Naive thymus-derived CD4-positive, alpha-beta T cell (primary cell): ENCODE measurements at regions of chr17 and their contacts with region 1.

Region 1: DNA sequence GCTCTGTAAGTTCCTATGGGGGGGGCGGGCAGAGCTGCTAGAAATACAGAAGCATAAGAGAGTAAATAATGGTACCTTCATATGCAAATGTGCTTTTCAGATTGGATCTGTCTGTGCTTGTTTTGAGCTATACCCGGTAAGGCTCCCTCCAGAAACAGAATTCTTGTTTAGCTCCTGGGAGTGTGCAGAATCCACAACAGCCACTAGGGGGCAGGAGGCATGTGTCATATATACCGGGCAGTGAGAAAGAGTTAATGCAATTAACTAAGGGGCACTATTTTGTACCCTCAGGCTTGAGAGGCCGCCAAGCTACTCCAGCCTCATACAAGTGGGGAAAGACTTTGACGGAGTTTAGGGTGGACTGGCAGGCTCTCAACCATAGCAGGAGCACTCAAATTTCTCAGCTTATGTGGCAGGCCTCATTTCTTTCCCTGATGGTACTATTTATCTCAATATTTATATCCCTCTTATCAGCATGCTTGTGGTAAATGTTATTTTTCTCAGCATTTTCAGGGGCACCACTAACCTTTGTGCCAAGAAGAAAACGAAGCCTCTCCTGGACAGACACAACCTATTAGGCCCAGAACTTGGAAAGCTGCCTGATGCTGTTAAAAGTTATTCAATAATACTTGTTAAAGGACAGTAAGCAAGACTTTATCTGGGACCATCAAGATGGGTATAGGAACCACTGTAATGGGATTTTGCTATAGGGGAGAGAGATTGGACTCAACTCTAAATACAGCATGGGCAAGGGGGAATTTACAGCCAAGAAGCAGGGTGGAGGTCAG is 10.7 kb upstream of the CENPV start:
- DNase-seq: peak; percentile 42 to 73 (median 57)
- ATAC-seq: peak; percentile 96
- H3K4me3 ChIP-seq: no peak overlapping the region
- H3K4me3 Mint-ChIP-seq: no peak overlapping the region
- H3K27ac ChIP-seq: no peak overlapping the region
- H3K27ac Mint-ChIP-seq: no peak overlapping the region
- H3K4me1 ChIP-seq: no peaks in the 10 kb centered on the region
- H3K4me1 Mint-ChIP-seq: peaks cover 0 to 5% (median 0%) of the 10 kb centered on the region in 7 donors
- H3K27me3 ChIP-seq: no peaks in the 10 kb centered on the region
- H3K27me3 Mint-ChIP-seq: no peaks in the 10 kb centered on the region

Region 2: DNA sequence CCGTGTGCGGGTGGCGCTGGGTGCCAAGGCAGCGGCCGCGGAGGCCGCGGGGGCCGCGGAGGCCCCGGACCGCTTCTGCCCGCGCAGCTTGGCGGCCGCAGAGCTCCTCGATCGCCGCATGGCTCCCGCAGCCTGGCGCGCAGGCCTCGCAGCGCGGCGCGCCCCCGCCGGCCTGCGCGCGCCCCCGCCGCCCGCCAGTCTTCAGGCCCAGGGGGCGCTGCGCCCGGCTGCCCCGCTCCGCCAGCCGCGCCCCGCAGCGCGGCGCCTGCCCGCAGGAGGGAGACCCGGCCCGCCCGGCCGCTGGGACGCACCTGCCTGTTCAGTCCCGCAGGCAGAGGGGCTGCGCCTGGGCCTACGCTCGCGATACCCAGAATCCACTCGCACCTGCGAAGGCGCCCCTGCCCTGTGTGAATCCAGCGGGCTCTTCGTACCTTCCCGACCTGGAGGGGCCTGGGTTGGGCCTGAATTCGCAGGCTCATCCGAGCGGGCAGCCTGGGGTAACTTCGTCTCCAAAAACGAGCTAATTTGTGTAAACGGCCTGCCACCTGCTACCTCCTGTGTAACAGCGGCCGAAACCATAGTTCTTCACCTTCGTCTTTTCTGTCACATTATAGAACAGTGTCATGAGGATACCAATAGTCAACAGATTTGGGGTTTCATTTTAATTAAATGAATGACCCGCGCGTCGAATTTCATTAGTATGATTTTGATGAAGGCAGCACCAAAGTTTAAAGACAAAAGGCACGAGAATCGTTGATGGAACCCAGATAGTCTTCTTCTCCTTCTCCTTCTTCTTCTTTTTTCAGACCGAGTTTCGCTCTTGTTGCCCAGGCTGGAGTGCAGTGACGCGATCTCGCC is 10.4 kb before region 1 on chr17 and contains the start of gene CENPV:
- CTCF ChIA-PET with region 1: interaction called, 19 read pairs
- POLR2A ChIA-PET with region 1: interaction called, 3 read pairs
- intact Hi-C with region 1: no loop called
- DNase-seq: peak; percentile 62 to 76 (median 71)
- ATAC-seq: peak; percentile 96
- H3K4me3 ChIP-seq: peak within 1 kb of the TSS; percentile 78
- H3K4me3 Mint-ChIP-seq: peak within 1 kb of the TSS; percentile 89 to 98 (median 95)
- H3K27ac ChIP-seq: peak within 1 kb of the TSS; percentile 73
- H3K27ac Mint-ChIP-seq: peak within 1 kb of the TSS; percentile 73 to 98 (median 86)
- H3K4me1 ChIP-seq: peaks cover 4 to 5% of the 10 kb centered on the region in 2 donors
- H3K4me1 Mint-ChIP-seq: peaks cover 11 to 23% (median 19%) of the 10 kb centered on the region in 7 donors
- H3K27me3 ChIP-seq: no peaks in the 10 kb centered on the region
- H3K27me3 Mint-ChIP-seq: peaks cover 0 to 27% (median 0%) of the 10 kb centered on the region in 5 donors
- total RNA-seq, gene CENPV: 9.8 to 30.3 (median 21.7) TPM

Region 3: DNA sequence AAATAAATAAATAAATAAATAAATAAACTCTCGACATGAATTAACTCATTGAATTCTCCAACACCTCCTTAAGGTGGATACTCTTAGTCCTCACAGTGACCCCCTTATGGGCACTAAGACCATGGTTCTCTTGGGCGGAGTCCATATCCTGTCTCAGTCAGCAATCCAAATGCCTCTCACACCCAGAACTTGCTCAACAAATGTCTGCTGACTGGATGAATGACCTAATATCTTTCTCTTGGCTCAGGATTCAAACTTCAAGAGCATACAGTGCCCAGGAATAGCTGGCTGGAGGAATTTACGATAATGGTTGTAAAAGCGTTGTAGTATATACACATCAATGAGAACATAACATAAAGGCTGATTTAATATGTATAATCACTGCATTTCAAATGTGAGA is 10.2 kb after region 1 on chr17:
- CTCF ChIA-PET with region 1: interaction called, 10 read pairs
- POLR2A ChIA-PET with region 1: interaction called, 5 read pairs
- intact Hi-C with region 1: no loop called
- DNase-seq: no peak
- ATAC-seq: no peak
- H3K4me3 ChIP-seq: no peak overlapping the region
- H3K4me3 Mint-ChIP-seq: no peak overlapping the region
- H3K27ac ChIP-seq: no peak overlapping the region
- H3K27ac Mint-ChIP-seq: no peak overlapping the region
- H3K4me1 ChIP-seq: no peaks in the 10 kb centered on the region
- H3K4me1 Mint-ChIP-seq: peaks cover 0 to 3% (median 0%) of the 10 kb centered on the region in 7 donors
- H3K27me3 ChIP-seq: no peaks in the 10 kb centered on the region
- H3K27me3 Mint-ChIP-seq: no peaks in the 10 kb centered on the region

Region 4: DNA sequence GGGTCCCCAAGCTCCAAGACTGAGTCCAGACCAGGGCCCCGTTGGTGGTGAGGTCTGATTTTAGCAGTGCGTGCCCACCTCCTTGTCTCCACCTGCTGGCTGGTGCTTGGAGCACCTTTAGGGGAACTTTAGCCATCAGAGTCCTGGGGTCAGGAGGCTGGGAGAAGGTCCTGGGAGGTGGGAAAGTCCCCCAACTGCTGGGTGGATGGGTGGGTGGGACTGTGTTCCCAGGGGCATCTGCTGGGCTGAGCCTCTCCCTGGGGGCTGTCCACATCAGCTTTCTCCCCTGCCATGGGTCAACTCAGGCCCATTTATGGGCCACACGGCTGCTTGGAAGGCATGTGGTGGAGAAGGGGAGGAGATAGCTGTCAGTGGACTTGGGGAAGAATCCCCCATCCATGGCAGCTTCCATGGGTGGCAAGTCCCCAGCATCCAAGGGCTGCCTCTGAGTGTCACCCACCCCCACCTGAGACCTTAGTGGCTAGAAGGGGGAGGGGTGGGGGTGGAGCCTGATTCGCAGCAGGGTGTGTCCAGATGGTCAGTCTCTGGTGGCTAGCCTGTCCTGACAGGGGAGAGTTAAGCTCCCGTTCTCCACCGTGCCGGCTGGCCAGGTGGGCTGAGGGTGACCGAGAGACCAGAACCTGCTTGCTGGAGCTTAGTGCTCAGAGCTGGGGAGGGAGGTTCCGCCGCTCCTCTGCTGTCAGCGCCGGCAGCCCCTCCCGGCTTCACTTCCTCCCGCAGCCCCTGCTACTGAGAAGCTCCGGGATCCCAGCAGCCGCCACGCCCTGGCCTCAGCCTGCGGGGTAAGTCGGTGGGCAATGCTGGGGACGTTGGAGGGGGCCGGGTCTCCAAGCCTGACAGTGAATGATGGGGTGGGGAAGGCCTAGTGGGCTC is 51.3 kb after region 1 on chr17 and contains the start of gene TRPV2:
- CTCF ChIA-PET with region 1: interaction called, 12 read pairs
- POLR2A ChIA-PET with region 1: interaction called, 6 read pairs
- intact Hi-C with region 1: loop called (anchors 1 kb)
- DNase-seq: peak in 8 of 9 donors; percentile 36 to 58 (median 47)
- ATAC-seq: peak; percentile 57
- H3K4me3 ChIP-seq: peak within 1 kb of the TSS; percentile 93
- H3K4me3 Mint-ChIP-seq: peak within 1 kb of the TSS; percentile 90 to 100 (median 98)
- H3K27ac ChIP-seq: peak within 1 kb of the TSS; percentile 94
- H3K27ac Mint-ChIP-seq: peak within 1 kb of the TSS; percentile 96 to 100 (median 98)
- H3K4me1 ChIP-seq: peaks cover 37 to 47% of the 10 kb centered on the region in 2 donors
- H3K4me1 Mint-ChIP-seq: peaks cover 33 to 55% (median 42%) of the 10 kb centered on the region in 7 donors
- H3K27me3 ChIP-seq: no peaks in the 10 kb centered on the region
- H3K27me3 Mint-ChIP-seq: no peaks in the 10 kb centered on the region
- total RNA-seq, gene TRPV2: 66.8 to 141 (median 80.0) TPM

Region 5: GRCh38 chr17:16521070-16521727 is 157.3 kb after region 1 on chr17:
- CTCF ChIA-PET with region 1: interaction called, 52 read pairs
- POLR2A ChIA-PET with region 1: no interaction called
- intact Hi-C with region 1: loop called (anchors 1 kb)
- DNase-seq: peak; percentile 21 to 71 (median 62)
- ATAC-seq: peak; percentile 95
- H3K4me3 ChIP-seq: no peak overlapping the region
- H3K4me3 Mint-ChIP-seq: no peak overlapping the region
- H3K27ac ChIP-seq: no peak overlapping the region
- H3K27ac Mint-ChIP-seq: peak overlapping the region in 1 of 9 donors; percentile 2
- H3K4me1 ChIP-seq: no peaks in the 10 kb centered on the region
- H3K4me1 Mint-ChIP-seq: peaks cover 0 to 13% (median 5%) of the 10 kb centered on the region in 7 donors
- H3K27me3 ChIP-seq: no peaks in the 10 kb centered on the region
- H3K27me3 Mint-ChIP-seq: peaks cover 16 to 38% (median 24%) of the 10 kb centered on the region in 5 donors